ENCODE measurements at regions of chr15 and their contacts with region 1.

Region 1: DNA sequence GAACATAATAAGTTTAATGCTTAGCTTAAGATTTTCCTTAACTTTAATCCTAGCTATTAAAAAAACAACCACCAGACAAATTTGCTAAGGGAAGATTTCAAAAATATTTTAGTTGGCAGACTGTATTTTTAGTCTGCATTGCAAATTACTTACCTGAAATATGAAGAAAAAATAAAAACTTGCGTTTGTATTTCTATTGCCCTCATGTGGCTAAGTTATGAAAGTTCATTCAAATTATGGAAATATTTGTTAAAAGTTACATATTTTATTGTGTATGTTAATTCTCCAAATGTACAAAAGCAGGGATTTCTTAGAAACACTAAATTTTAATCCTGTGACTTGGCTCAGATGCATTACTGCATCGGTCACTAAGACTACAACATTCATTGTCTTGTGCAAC is 15.0 kb downstream of the GTF2A2 start:
- DNase-seq: no peak
- H3K4me3 Mint-ChIP-seq: no peak overlapping the region
- H3K27ac Mint-ChIP-seq: no peak overlapping the region
- H3K4me1 Mint-ChIP-seq: peaks cover 5% of the 10 kb centered on the region
- H3K27me3 Mint-ChIP-seq: no peaks in the 10 kb centered on the region
- CTCF ChIP-seq: no peak

Region 2: GRCh38 chr15:59656897-59657634 is 14.7 kb after region 1 on chr15 and contains the start of gene GTF2A2:
- CTCF ChIA-PET with region 1: interaction called, 10 read pairs
- POLR2A ChIA-PET with region 1: interaction called, 31 read pairs
- intact Hi-C with region 1: no loop called
- DNase-seq: peak; percentile 96
- H3K4me3 Mint-ChIP-seq: no peak within 1 kb of the TSS
- H3K27ac Mint-ChIP-seq: peak within 1 kb of the TSS; percentile 84
- H3K4me1 Mint-ChIP-seq: no peaks in the 10 kb centered on the region
- H3K27me3 Mint-ChIP-seq: no peaks in the 10 kb centered on the region
- CTCF ChIP-seq: no peak
- total RNA-seq, gene GTF2A2: 152 and 165 TPM in 2 replicates